Caco-2 (cell line): ENCODE measurements at regions of chr11 and their contacts with region 1.

Region 1: GRCh38 chr11:118530408-118531339 is at the start of gene TMEM25:
- DNase-seq: peak; percentile 89 to 95
- H3K4me3 ChIP-seq: peak within 1 kb of the TSS; percentile 57
- H3K4me3 Mint-ChIP-seq: peak within 1 kb of the TSS; percentile 98
- H3K27ac Mint-ChIP-seq: peak within 1 kb of the TSS; percentile 43
- H3K4me1 ChIP-seq: peaks cover 39% of the 10 kb centered on the region
- H3K4me1 Mint-ChIP-seq: peaks cover 34% of the 10 kb centered on the region
- H3K27me3 ChIP-seq: no peaks in the 10 kb centered on the region
- H3K27me3 Mint-ChIP-seq: no peaks in the 10 kb centered on the region
- CTCF ChIP-seq: no peak
- total RNA-seq, gene TMEM25: 53.8 and 63.1 TPM in 2 replicates

Region 2: DNA sequence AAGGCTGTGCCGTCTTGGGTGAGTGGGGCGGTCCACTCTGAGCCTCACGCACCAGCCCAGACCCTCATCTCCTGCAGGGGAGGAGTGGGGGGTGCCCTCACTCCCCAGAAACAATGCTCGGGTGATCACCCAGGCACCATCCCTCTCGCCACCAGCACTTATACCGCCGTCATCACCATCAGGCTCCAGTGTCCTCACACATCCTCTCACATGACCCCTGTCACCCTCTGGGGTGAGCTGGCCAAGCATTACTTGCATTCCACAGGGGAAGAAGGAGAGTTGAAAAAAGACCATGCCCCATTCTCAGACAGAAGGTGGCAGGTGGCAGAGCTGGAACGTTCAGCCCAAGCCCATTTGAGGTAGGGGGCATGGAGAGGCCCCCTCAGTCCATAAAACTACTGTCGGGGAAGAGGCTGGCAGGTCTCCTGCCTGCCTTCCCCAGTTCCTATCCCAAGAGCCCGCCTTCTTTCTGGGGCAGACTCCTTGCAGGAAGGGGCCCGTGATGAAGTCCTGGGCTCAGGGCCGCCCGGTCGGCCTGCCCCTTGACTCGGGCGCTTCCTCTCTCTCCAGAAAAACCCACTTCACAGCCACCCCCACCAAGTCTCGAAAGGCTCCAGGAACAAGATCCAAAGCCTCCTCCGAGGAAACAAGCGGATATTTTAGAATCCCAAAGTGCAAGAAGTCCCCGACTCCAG is 886.9 kb before region 1 on chr11:
- CTCF ChIA-PET with region 1: no interaction called
- POLR2A ChIA-PET with region 1: no interaction called
- intact Hi-C with region 1: no loop called
- DNase-seq: no peak
- H3K4me3 ChIP-seq: no peak overlapping the region
- H3K4me3 Mint-ChIP-seq: no peak overlapping the region
- H3K27ac Mint-ChIP-seq: no peak overlapping the region
- H3K4me1 ChIP-seq: peaks cover 8% of the 10 kb centered on the region
- H3K4me1 Mint-ChIP-seq: peaks cover 11% of the 10 kb centered on the region
- H3K27me3 ChIP-seq: no peaks in the 10 kb centered on the region; the same call in none of the 2 replicates
- H3K27me3 Mint-ChIP-seq: peaks cover 10% of the 10 kb centered on the region
- CTCF ChIP-seq: no peak

Region 3: DNA sequence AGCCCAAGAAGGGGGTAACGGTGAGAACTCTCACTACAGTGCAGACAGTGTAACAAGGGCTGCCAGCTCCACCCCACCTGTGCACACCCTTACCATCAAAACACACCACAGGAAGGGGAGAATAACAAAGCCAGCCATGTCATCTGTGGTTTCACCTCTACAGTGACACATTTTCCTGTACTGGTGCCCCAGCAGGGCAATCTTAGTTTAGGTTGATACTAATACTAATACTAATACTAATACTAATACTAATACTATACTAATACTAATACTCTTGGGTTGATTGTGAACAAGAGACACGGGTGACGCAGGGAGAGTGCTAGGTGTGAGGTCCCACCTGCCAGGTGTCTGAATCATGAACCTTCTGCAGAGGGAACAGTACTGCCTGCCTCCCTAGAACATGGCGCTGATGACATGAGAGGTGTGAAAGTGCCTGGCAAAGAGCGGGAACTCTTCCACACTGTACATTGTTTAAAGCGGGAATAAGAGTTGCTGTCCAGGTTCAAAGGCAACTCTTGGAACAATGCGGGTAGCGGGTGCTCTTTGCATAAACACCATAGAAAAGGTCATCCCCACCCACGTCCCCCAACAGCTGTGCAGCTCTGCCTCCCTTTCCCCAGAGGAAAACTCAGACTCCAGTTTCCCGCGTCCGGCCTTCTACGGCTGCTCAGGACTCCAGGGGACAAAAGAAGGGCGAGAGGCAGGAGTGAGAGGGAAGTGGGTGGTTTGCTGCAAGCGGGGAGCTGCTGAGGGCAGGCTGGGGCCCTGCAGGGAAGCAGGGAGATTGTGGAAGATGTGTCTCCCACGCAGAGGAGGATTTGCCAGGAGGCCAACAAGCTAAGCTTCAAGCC is 478.8 kb before region 1 on chr11:
- CTCF ChIA-PET with region 1: no interaction called
- POLR2A ChIA-PET with region 1: no interaction called
- intact Hi-C with region 1: no loop called
- DNase-seq: peak in 1 of 2 experiments; percentile 31
- H3K4me3 ChIP-seq: no peak overlapping the region
- H3K4me3 Mint-ChIP-seq: no peak overlapping the region
- H3K27ac Mint-ChIP-seq: no peak overlapping the region
- H3K4me1 ChIP-seq: no peaks in the 10 kb centered on the region
- H3K4me1 Mint-ChIP-seq: no peaks in the 10 kb centered on the region
- H3K27me3 ChIP-seq: no peaks in the 10 kb centered on the region
- H3K27me3 Mint-ChIP-seq: no peaks in the 10 kb centered on the region
- CTCF ChIP-seq: no peak

Region 4: GRCh38 chr11:118514103-118514502 is 16.6 kb before region 1 on chr11:
- CTCF ChIA-PET with region 1: interaction called, 3 read pairs
- POLR2A ChIA-PET with region 1: interaction called, 4 read pairs
- intact Hi-C with region 1: loop called (anchors 2 kb)
- DNase-seq: no peak
- H3K4me3 ChIP-seq: no peak overlapping the region
- H3K4me3 Mint-ChIP-seq: no peak overlapping the region
- H3K27ac Mint-ChIP-seq: no peak overlapping the region
- H3K4me1 ChIP-seq: peaks cover 30% of the 10 kb centered on the region
- H3K4me1 Mint-ChIP-seq: peaks cover 28% of the 10 kb centered on the region
- H3K27me3 ChIP-seq: no peaks in the 10 kb centered on the region
- H3K27me3 Mint-ChIP-seq: no peaks in the 10 kb centered on the region
- CTCF ChIP-seq: no peak

Region 5: DNA sequence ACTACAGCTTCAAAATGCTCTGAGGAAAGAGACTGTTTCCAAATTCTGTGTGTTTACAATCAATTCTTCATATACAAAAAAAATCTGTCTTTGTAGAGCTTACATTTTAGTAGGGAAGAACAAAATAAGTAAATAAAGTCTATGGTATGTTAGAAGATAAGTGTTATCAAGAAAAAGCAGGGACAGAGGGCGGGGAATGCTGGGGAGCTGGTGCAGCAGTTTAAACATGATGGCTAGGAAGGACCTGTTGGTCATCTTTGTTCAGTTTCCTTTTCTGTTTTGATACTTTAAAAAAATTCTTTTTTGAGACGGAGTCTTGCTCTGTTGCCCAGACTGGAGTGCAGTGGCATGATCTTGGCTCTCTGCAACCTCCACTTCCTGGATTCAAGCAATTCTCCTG is 16.5 kb after region 1 on chr11:
- CTCF ChIA-PET with region 1: no interaction called
- POLR2A ChIA-PET with region 1: no interaction called
- intact Hi-C with region 1: loop called (anchors 1 kb)
- DNase-seq: no peak
- H3K4me3 ChIP-seq: no peak overlapping the region
- H3K4me3 Mint-ChIP-seq: no peak overlapping the region
- H3K27ac Mint-ChIP-seq: no peak overlapping the region
- H3K4me1 ChIP-seq: peaks cover 8% of the 10 kb centered on the region
- H3K4me1 Mint-ChIP-seq: no peaks in the 10 kb centered on the region
- H3K27me3 ChIP-seq: no peaks in the 10 kb centered on the region
- H3K27me3 Mint-ChIP-seq: no peaks in the 10 kb centered on the region
- CTCF ChIP-seq: no peak

Region 6: GRCh38 chr11:118552341-118552740 is 21.7 kb after region 1 on chr11:
- CTCF ChIA-PET with region 1: no interaction called
- POLR2A ChIA-PET with region 1: no interaction called
- intact Hi-C with region 1: loop called (anchors 1 kb)
- DNase-seq: peak in 1 of 2 experiments; percentile 12
- H3K4me3 ChIP-seq: no peak overlapping the region
- H3K4me3 Mint-ChIP-seq: no peak overlapping the region
- H3K27ac Mint-ChIP-seq: no peak overlapping the region
- H3K4me1 ChIP-seq: peaks cover 2% of the 10 kb centered on the region; the same call in 1 of the 2 replicates
- H3K4me1 Mint-ChIP-seq: no peaks in the 10 kb centered on the region
- H3K27me3 ChIP-seq: no peaks in the 10 kb centered on the region
- H3K27me3 Mint-ChIP-seq: no peaks in the 10 kb centered on the region
- CTCF ChIP-seq: no peak

Region 7: DNA sequence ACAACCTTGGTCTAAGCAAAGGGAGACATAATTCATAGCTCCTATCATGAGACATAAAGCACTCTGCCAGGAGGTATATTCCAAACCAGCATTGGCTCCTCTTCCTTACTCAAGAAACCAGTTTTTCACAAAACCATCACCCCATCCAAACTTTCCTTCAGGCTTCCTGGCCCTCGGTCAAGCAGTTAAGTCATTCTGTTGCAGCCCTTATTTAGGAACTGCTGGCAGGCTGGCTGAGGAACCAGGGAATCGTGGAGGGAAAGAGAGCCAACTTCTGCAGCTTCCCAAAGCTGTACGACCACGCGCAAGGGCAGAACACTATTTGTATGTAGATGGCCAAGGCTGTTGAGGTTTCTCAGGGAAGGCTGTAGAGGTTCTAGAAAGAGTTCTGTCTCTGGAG is 34.4 kb after region 1 on chr11:
- CTCF ChIA-PET with region 1: interaction called, 4 read pairs
- POLR2A ChIA-PET with region 1: no interaction called
- intact Hi-C with region 1: loop called (anchors 1 kb)
- DNase-seq: no peak
- H3K4me3 ChIP-seq: 0 out of 2 replicates have a peak overlapping the region, but pooled peaks have one; percentile 6
- H3K4me3 Mint-ChIP-seq: peak overlapping the region; percentile 95
- H3K27ac Mint-ChIP-seq: no peak overlapping the region
- H3K4me1 ChIP-seq: no peaks in the 10 kb centered on the region
- H3K4me1 Mint-ChIP-seq: peaks cover 9% of the 10 kb centered on the region
- H3K27me3 ChIP-seq: no peaks in the 10 kb centered on the region
- H3K27me3 Mint-ChIP-seq: no peaks in the 10 kb centered on the region
- CTCF ChIP-seq: no peak

Region 8: GRCh38 chr11:118883368-118884071 is 352.8 kb after region 1 on chr11 and contains the start of gene CXCR5:
- CTCF ChIA-PET with region 1: no interaction called
- POLR2A ChIA-PET with region 1: no interaction called
- intact Hi-C with region 1: no loop called
- DNase-seq: no peak
- H3K4me3 ChIP-seq: no peak within 1 kb of the TSS
- H3K4me3 Mint-ChIP-seq: no peak within 1 kb of the TSS
- H3K27ac Mint-ChIP-seq: no peak within 1 kb of the TSS
- H3K4me1 ChIP-seq: 0 out of 2 replicates have a peak, but pooled peaks cover 7% of the 10 kb centered on the region
- H3K4me1 Mint-ChIP-seq: no peaks in the 10 kb centered on the region
- H3K27me3 ChIP-seq: no peaks in the 10 kb centered on the region
- H3K27me3 Mint-ChIP-seq: no peaks in the 10 kb centered on the region
- CTCF ChIP-seq: no peak
- total RNA-seq, gene CXCR5: not detected in 2 replicates